ENCODE measurements at regions of chr11 and their contacts with region 1.

Region 1: DNA sequence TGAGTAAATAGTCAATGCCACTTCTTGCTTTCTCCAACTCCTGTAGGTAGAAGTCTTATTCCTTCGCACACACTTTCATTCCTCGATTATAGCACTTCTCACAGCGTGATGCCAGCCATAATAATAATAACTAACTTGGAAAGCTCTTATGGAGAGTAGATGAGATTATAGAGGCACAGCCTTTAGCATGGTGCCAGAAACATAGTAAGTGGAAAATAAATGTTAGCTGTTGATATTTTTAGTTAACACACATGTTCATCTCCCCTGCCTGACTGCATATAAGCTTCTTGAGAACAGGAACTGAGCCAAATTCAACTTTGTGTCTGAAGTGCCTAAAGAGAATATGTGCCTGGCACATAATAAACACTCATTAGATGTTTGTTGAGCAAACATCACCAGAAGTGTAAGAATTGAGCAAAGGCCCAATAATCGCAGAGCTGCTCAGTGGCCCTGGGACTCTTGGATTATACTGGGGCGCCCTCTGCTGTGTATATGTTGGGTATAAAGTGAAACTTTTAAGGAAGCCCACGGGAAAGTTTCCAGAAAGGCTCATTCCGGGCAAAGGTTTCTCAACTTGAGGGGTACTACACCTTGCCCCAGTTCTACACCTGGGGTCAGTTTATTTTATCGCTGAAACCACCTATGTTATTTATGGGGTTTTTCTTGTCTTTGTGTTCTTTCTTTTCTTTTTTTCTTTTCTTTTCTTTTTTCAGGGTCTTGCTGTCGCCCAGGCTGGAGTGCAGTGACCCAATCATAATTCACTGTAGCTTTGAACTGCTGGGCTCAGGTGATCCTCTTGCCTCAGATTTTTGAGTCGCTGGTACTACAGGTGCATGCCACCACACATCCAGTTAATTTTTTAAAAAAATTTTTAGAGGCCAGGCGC is 22.3 kb downstream of the SLN start:
- DNase-seq: peak; percentile 78 to 84
- H3K4me3 ChIP-seq: no peak overlapping the region
- H3K4me3 Mint-ChIP-seq: no peak overlapping the region
- H3K27ac Mint-ChIP-seq: no peak overlapping the region
- H3K4me1 ChIP-seq: no peaks in the 10 kb centered on the region
- H3K4me1 Mint-ChIP-seq: no peaks in the 10 kb centered on the region
- H3K27me3 ChIP-seq: no peaks in the 10 kb centered on the region
- H3K27me3 Mint-ChIP-seq: peaks cover 4% of the 10 kb centered on the region
- CTCF ChIP-seq: peak; percentile 86 to 97

Region 2: DNA sequence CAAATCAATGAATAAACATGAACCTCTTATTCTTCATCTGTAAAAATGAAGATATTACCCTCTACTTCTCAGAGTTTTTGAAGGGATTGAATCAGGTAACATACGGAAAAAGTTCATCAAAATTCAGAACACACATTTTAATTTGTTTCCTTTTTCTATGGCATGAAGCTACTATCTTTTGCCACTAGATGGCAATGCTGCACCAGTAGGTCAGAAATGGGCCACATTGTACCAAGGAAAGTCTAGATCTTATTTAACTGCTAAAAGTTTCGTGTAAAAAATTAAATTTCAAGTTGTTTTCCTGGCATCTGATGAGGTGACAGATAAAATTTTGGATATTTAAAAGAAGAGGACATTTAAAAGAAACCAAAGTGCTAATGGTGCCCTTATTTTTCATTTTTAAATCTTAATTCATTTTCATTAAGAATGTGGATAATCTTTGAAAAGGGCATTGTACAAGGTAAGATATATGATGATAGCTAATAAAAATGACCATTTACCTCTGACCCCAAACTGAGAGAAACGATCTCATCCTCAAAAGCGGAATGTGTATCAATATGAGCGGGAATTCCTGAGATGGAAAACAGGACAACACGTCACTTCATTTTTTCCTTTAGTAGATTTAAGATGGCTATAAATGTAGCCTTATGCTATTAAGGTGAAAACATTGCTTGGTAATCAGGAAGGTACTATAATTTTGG is 140.2 kb before region 1 on chr11:
- CTCF ChIA-PET with region 1: interaction called, 36 read pairs
- POLR2A ChIA-PET with region 1: no interaction called
- intact Hi-C with region 1: loop called (anchors 1 kb)
- DNase-seq: peak in 1 of 2 experiments; percentile 50
- H3K4me3 ChIP-seq: no peak overlapping the region
- H3K4me3 Mint-ChIP-seq: no peak overlapping the region
- H3K27ac Mint-ChIP-seq: no peak overlapping the region
- H3K4me1 ChIP-seq: 0 out of 2 replicates have a peak, but pooled peaks cover 8% of the 10 kb centered on the region
- H3K4me1 Mint-ChIP-seq: peaks cover 7% of the 10 kb centered on the region
- H3K27me3 ChIP-seq: no peaks in the 10 kb centered on the region
- H3K27me3 Mint-ChIP-seq: no peaks in the 10 kb centered on the region
- CTCF ChIP-seq: peak; percentile 88 to 94

Region 3: GRCh38 chr11:107565219-107565937 is 124.2 kb before region 1 on chr11 and contains the start of gene ALKBH8:
- CTCF ChIA-PET with region 1: interaction called, 22 read pairs
- POLR2A ChIA-PET with region 1: no interaction called
- intact Hi-C with region 1: loop called (anchors 1 kb)
- DNase-seq: peak; percentile 83
- H3K4me3 ChIP-seq: peak within 1 kb of the TSS; percentile 63
- H3K4me3 Mint-ChIP-seq: peak within 1 kb of the TSS; percentile 96
- H3K27ac Mint-ChIP-seq: peak within 1 kb of the TSS; percentile 94
- H3K4me1 ChIP-seq: peaks cover 17% of the 10 kb centered on the region
- H3K4me1 Mint-ChIP-seq: peaks cover 13% of the 10 kb centered on the region
- H3K27me3 ChIP-seq: no peaks in the 10 kb centered on the region
- H3K27me3 Mint-ChIP-seq: no peaks in the 10 kb centered on the region
- CTCF ChIP-seq: no peak
- total RNA-seq, gene ALKBH8: 15.7 and 16.8 TPM in 2 replicates

Region 4: DNA sequence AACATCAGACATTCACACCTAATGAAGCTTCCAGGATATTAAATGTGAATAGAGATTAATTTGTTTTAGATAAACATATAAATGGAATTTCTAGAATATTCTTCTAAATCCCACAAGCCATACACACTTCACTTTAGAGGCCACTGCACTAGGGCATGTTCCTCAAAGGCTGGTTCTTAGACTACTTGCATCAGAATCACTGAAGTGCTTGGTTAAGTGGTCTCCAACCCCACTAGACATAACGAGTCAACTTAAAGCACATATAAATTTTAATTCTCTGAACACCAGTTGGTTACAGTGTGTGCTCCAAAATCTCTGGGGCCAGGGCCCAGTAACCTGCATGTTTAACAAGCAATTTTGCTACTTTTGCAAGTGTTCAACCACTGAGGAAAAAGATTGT is 116.1 kb before region 1 on chr11:
- CTCF ChIA-PET with region 1: interaction called, 5 read pairs
- POLR2A ChIA-PET with region 1: no interaction called
- intact Hi-C with region 1: loop called (anchors 1 kb)
- DNase-seq: no peak
- H3K4me3 ChIP-seq: no peak overlapping the region
- H3K4me3 Mint-ChIP-seq: no peak overlapping the region
- H3K27ac Mint-ChIP-seq: no peak overlapping the region
- H3K4me1 ChIP-seq: no peaks in the 10 kb centered on the region
- H3K4me1 Mint-ChIP-seq: no peaks in the 10 kb centered on the region
- H3K27me3 ChIP-seq: peaks cover 1% of the 10 kb centered on the region; the same call in 1 of the 2 replicates
- H3K27me3 Mint-ChIP-seq: peaks cover 9% of the 10 kb centered on the region
- CTCF ChIP-seq: no peak

Region 5: GRCh38 chr11:107598225-107599139 is 91.1 kb before region 1 on chr11:
- CTCF ChIA-PET with region 1: interaction called, 7 read pairs
- POLR2A ChIA-PET with region 1: no interaction called
- intact Hi-C with region 1: loop called (anchors 1 kb)
- DNase-seq: peak; percentile 42 to 46
- H3K4me3 ChIP-seq: no peak overlapping the region
- H3K4me3 Mint-ChIP-seq: no peak overlapping the region
- H3K27ac Mint-ChIP-seq: no peak overlapping the region
- H3K4me1 ChIP-seq: no peaks in the 10 kb centered on the region
- H3K4me1 Mint-ChIP-seq: no peaks in the 10 kb centered on the region
- H3K27me3 ChIP-seq: 0 out of 2 replicates have a peak, but pooled peaks cover 1% of the 10 kb centered on the region
- H3K27me3 Mint-ChIP-seq: peaks cover 14% of the 10 kb centered on the region
- CTCF ChIP-seq: peak; percentile 63 to 75

Region 6: GRCh38 chr11:107651672-107652071 is 37.9 kb before region 1 on chr11:
- CTCF ChIA-PET with region 1: interaction called, 5 read pairs
- POLR2A ChIA-PET with region 1: no interaction called
- intact Hi-C with region 1: loop called (anchors 2 kb)
- DNase-seq: no peak
- H3K4me3 ChIP-seq: no peak overlapping the region
- H3K4me3 Mint-ChIP-seq: no peak overlapping the region
- H3K27ac Mint-ChIP-seq: no peak overlapping the region
- H3K4me1 ChIP-seq: no peaks in the 10 kb centered on the region
- H3K4me1 Mint-ChIP-seq: no peaks in the 10 kb centered on the region
- H3K27me3 ChIP-seq: no peaks in the 10 kb centered on the region
- H3K27me3 Mint-ChIP-seq: peaks cover 28% of the 10 kb centered on the region
- CTCF ChIP-seq: no peak

Measured in Caco-2 (cell line).